Activated T-helper 2 cell treated with anti-CD3 and anti-CD28 coated beads, Interferon-gamma antibody, Interleukin-2, Interleukin-4, amounts not matched to agents 10 μg/mL and 5 μg/mL and 100 μg/mL, durations not matched to agents 14 hours and 24 hours and 36 hours (primary cell): ENCODE measurements at regions of chr13 and their contacts with region 1.

Region 1: GRCh38 chr13:26698392-26699196 is 62.0 kb downstream of the GPR12 start:
- DNase-seq: peak; percentile 69
- H3K4me3 Mint-ChIP-seq: no peak overlapping the region
- H3K27ac Mint-ChIP-seq: no peak overlapping the region
- H3K4me1 Mint-ChIP-seq: peaks cover 2% of the 10 kb centered on the region
- H3K27me3 Mint-ChIP-seq: peaks cover 6% of the 10 kb centered on the region

Region 2: GRCh38 chr13:26482451-26483197 is 216.0 kb before region 1 on chr13:
- intact Hi-C with region 1: loop called (anchors 1 kb)
- DNase-seq: peak; percentile 50
- H3K4me3 Mint-ChIP-seq: no peak overlapping the region
- H3K27ac Mint-ChIP-seq: no peak overlapping the region
- H3K4me1 Mint-ChIP-seq: peaks cover 4% of the 10 kb centered on the region
- H3K27me3 Mint-ChIP-seq: no peaks in the 10 kb centered on the region

Region 3: GRCh38 chr13:26557393-26558023 is 141.1 kb before region 1 on chr13 and contains the start of gene WASF3:
- intact Hi-C with region 1: no loop called
- DNase-seq: peak; percentile 62
- H3K4me3 Mint-ChIP-seq: peak within 1 kb of the TSS; percentile 65
- H3K27ac Mint-ChIP-seq: no peak within 1 kb of the TSS
- H3K4me1 Mint-ChIP-seq: peaks cover 7% of the 10 kb centered on the region
- H3K27me3 Mint-ChIP-seq: peaks cover 40% of the 10 kb centered on the region
- total RNA-seq, gene WASF3: 0.25 and 0.57 TPM in 2 replicates